Activated CD8-positive, alpha-beta T cell treated with anti-CD3 and anti-CD28 coated beads for 36 hours (primary cell): ENCODE measurements at regions of chr2 and their contacts with region 1.

Region 1: GRCh38 chr2:217785544-217786045 is 217.2 kb downstream of the TNS1 start:
- DNase-seq: peak; percentile 85
- ATAC-seq: peak; percentile 64
- H3K4me3 Mint-ChIP-seq: no peak overlapping the region
- H3K27ac Mint-ChIP-seq: peak overlapping the region; percentile 39
- H3K4me1 Mint-ChIP-seq: peaks cover 11% of the 10 kb centered on the region
- H3K27me3 Mint-ChIP-seq: no peaks in the 10 kb centered on the region
- CTCF ChIP-seq: peak; percentile 93

Region 2: GRCh38 chr2:217713395-217714286 is 72.0 kb before region 1 on chr2:
- CTCF ChIA-PET with region 1: no interaction called
- POLR2A ChIA-PET with region 1: no interaction called
- intact Hi-C with region 1: no loop called
- DNase-seq: peak; percentile 84
- ATAC-seq: peak; percentile 90
- H3K4me3 Mint-ChIP-seq: no peak overlapping the region
- H3K27ac Mint-ChIP-seq: no peak overlapping the region
- H3K4me1 Mint-ChIP-seq: peaks cover 4% of the 10 kb centered on the region
- H3K27me3 Mint-ChIP-seq: no peaks in the 10 kb centered on the region
- CTCF ChIP-seq: peak; percentile 87

Region 3: DNA sequence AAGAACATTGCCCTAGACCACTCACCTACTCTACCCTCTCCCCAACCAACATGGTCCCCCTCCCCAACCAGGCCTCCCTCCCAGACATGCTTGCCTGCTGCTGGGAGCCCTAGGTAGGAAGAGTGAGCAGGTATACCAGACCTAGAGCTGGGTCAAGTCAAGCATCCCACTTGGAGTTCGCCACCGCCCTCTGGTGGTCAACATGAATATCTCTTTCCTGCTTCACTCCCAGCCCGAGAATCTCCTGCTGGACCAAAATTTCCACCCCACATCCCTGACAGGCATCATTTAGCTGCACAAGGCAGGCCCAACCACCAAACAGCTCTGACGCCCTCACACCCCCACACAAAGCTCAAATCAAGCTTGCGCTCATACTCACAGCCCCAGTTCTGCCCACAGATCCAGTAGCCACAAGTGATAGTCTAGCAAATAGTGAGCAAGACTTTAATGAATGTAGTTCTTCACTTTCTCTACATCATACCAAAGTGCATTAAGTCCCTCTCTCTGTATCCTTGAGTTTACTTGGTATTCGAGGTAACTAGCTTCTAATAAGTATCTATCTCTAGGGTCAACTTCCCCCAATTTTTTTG is 101.2 kb after region 1 on chr2:
- CTCF ChIA-PET with region 1: interaction called, 188 read pairs
- POLR2A ChIA-PET with region 1: interaction called, 5 read pairs
- intact Hi-C with region 1: loop called (anchors 5 kb)
- DNase-seq: peak; percentile 79
- ATAC-seq: peak; percentile 87
- H3K4me3 Mint-ChIP-seq: no peak overlapping the region
- H3K27ac Mint-ChIP-seq: no peak overlapping the region
- H3K4me1 Mint-ChIP-seq: no peaks in the 10 kb centered on the region
- H3K27me3 Mint-ChIP-seq: peaks cover 2% of the 10 kb centered on the region
- CTCF ChIP-seq: peak; percentile 71

Region 4: DNA sequence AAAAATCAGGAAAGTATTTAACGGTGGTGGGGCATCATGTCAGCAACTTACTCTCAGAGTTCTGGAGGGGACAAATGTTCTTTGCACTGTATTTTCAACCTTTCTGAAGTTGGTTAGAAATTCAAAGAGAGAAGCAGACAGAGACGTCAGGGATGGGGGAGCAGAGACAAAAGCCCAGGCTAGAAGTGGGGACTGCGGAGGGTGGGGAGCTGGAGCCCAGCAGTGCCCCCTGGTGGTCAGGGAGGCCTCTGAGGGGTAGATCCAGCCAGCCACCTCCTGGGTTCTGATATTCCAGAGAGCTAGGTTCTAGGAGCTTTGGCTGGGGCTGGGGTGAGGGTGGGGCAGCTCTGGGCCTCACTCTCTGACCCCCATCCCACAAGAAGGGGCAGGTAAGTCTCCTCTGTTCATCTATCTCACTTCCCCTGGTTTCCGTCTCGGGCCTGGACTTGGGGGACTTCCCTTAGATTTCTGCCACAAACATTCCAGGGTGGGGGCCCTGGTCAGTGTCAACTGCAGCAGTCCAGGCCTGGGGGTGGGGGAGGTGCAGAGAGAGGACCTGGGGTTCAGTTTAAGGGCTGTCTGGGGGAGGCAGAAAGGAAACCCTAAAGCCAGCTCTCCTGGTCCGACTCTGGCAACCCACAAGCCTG is 208.3 kb after region 1 on chr2:
- CTCF ChIA-PET with region 1: interaction called, 129 read pairs
- POLR2A ChIA-PET with region 1: interaction called, 3 read pairs
- intact Hi-C with region 1: loop called (anchors 1 kb)
- DNase-seq: peak; percentile 75
- ATAC-seq: peak; percentile 77
- H3K4me3 Mint-ChIP-seq: no peak overlapping the region
- H3K27ac Mint-ChIP-seq: no peak overlapping the region
- H3K4me1 Mint-ChIP-seq: peaks cover 5% of the 10 kb centered on the region
- H3K27me3 Mint-ChIP-seq: peaks cover 6% of the 10 kb centered on the region
- CTCF ChIP-seq: peak; percentile 83

Region 5: GRCh38 chr2:218043701-218044109 is 258.1 kb after region 1 on chr2:
- CTCF ChIA-PET with region 1: interaction called, 11 read pairs
- POLR2A ChIA-PET with region 1: no interaction called
- intact Hi-C with region 1: no loop called
- DNase-seq: no peak
- ATAC-seq: no peak
- H3K4me3 Mint-ChIP-seq: no peak overlapping the region
- H3K27ac Mint-ChIP-seq: no peak overlapping the region
- H3K4me1 Mint-ChIP-seq: peaks cover 2% of the 10 kb centered on the region
- H3K27me3 Mint-ChIP-seq: peaks cover 16% of the 10 kb centered on the region
- CTCF ChIP-seq: no peak

Region 6: DNA sequence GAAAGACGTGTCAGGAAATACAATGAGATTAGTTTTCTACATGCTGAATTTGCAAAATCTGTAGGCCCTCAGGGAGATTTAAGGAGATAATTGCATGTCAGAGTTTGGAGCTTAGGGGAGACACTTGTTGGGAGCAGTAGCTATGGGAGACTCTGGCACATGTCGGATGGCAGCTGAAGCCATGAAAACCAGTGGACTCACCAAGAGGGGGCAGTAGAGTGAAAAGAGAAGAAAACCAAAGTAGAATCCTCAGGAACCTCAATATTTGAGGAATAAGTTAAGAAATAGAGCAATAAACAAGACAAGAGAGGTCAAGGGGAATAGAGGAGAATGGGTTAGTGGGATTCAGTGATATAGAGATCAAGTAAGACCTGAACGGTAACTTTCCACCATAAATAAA is 308.3 kb after region 1 on chr2:
- CTCF ChIA-PET with region 1: no interaction called
- POLR2A ChIA-PET with region 1: no interaction called
- intact Hi-C with region 1: no loop called
- DNase-seq: no peak
- ATAC-seq: no peak
- H3K4me3 Mint-ChIP-seq: no peak overlapping the region
- H3K27ac Mint-ChIP-seq: no peak overlapping the region
- H3K4me1 Mint-ChIP-seq: no peaks in the 10 kb centered on the region
- H3K27me3 Mint-ChIP-seq: peaks cover 5% of the 10 kb centered on the region
- CTCF ChIP-seq: no peak